Upper lobe of right lung (tissue), 1 donor: ENCODE measurements at regions of chr3 and their contacts with region 1.

Region 1: DNA sequence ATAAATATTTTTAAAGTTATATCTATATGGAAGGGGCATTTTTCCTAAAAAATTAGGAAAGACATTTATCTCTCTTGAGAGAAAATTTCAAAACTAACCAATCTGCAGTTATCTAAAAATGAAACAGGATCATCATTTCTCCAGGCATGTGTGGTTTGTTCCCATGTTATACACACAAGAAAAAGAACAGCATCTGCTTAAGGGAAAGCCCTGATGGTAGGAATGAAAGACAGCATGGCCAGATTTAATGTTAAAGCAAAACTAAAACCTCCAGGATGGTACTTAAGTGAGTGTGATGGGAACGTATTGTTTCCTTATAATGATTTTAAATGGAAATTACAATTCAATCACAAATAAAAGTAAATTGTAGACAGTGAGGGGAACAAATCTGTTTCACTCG is 46.2 kb upstream of the GYG1 start:
- DNase-seq: no peak
- ATAC-seq: no peak
- H3K4me3 ChIP-seq: no peak overlapping the region
- H3K27ac ChIP-seq: no peak overlapping the region
- H3K4me1 ChIP-seq: no peaks in the 10 kb centered on the region
- H3K27me3 ChIP-seq: no peaks in the 10 kb centered on the region
- CTCF ChIP-seq: no peak

Region 2: DNA sequence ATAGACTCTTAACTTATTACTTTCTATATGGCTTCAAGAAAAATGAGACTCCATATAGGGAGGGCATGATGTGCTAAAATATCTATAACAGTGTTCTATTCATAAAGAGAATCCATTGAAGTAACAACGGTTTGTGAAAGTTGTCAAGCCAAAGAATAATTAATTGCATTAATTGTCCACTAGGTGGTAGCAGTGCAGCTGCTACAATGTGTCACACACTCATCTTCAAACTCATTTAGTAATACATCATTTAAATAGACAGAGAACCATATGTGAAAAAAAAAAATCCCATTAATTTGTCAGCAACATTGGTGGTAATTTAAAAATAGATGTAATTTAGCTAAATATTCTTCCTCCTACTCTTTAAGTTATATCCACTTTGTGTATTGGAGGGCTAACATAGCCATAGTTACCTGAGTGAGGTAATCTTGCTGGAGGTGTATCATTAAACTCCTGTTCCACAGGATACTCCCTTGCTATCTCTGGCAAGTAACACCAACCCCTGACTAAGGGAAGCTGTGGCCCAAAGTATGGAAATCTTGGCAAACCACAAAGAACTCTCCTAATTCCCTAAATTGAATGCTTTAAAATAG is 83.7 kb before region 1 on chr3:
- intact Hi-C with region 1: loop called (anchors 5 kb)
- DNase-seq: no peak
- ATAC-seq: peak; percentile 62
- H3K4me3 ChIP-seq: no peak overlapping the region
- H3K27ac ChIP-seq: no peak overlapping the region
- H3K4me1 ChIP-seq: no peaks in the 10 kb centered on the region
- H3K27me3 ChIP-seq: no peaks in the 10 kb centered on the region
- CTCF ChIP-seq: peak; percentile 80